BJ (cell line): ENCODE measurements at regions of chr11 and their contacts with region 1.

Region 1: GRCh38 chr11:71372693-71373657 is 75.2 kb downstream of the DHCR7 start:
- DNase-seq: no peak
- H3K4me3 ChIP-seq: no peak overlapping the region
- H3K27me3 ChIP-seq: peaks cover 6% of the 10 kb centered on the region; the same call in 1 of the 2 replicates
- CTCF ChIP-seq: peak; percentile 68

Region 2: GRCh38 chr11:71086675-71087258 is 286.2 kb before region 1 on chr11:
- CTCF ChIA-PET with region 1: interaction called, 21 read pairs
- POLR2A ChIA-PET with region 1: no interaction called
- DNase-seq: no peak
- H3K4me3 ChIP-seq: no peak overlapping the region
- H3K27me3 ChIP-seq: no peaks in the 10 kb centered on the region
- CTCF ChIP-seq: peak; percentile 56

Region 3: DNA sequence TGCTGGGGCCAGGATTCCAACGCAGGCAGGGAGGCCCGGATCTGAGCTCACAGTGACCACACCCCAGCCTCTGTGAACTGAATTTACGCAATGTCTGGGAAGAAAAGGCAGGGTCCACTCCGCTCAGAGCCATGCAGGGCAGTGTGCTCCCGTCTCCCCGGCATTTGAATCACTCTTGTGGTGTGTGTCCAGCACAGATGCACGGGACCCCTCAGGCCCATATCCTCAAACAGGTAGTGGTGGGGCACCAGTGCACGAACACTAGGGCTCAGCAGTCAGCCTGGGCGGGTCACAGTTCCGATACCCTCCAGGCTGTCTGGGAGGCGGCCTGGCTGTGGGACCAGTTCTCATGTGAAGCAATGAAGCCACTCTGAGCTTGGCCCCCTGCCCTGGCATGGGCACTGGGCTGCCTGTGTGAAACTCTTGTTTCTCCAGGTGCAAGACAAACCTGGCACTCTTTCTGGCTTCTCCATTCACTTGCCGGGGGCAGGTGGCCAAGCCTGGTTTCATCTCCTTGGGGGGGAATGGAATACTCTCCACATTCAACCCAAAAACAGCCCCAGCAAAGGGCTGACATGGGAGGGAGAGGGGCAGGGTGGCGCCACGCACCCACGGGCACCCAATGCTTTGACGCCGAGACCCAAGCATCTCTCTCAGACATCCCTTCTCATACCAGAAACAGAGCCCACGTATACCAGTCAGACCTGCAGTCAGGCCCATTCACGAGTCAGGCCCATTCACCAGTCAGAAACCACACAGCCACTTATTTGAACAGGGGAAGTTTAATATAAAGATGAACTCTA is 60.9 kb after region 1 on chr11:
- CTCF ChIA-PET with region 1: no interaction called
- POLR2A ChIA-PET with region 1: no interaction called
- DNase-seq: no peak
- H3K4me3 ChIP-seq: no peak overlapping the region
- H3K27me3 ChIP-seq: no peaks in the 10 kb centered on the region
- CTCF ChIP-seq: no peak

Region 4: GRCh38 chr11:71551711-71552110 is 178.7 kb after region 1 on chr11:
- CTCF ChIA-PET with region 1: no interaction called
- POLR2A ChIA-PET with region 1: no interaction called
- DNase-seq: no peak
- H3K4me3 ChIP-seq: no peak overlapping the region
- H3K27me3 ChIP-seq: no peaks in the 10 kb centered on the region
- CTCF ChIP-seq: no peak